ENCODE measurements at regions of chr9 and their contacts with region 1.

Region 1: GRCh38 chr9:114681594-114682332 is at the start of gene TEX48:
- H3K4me3 Mint-ChIP-seq: no peak within 1 kb of the TSS
- H3K27ac Mint-ChIP-seq: no peak within 1 kb of the TSS
- H3K4me1 Mint-ChIP-seq: peaks cover 26% of the 10 kb centered on the region
- H3K27me3 Mint-ChIP-seq: peaks cover 2% of the 10 kb centered on the region

Region 2: GRCh38 chr9:114738581-114739316 is 57.0 kb after region 1 on chr9:
- intact Hi-C with region 1: loop called (anchors 5 kb)
- H3K4me3 Mint-ChIP-seq: no peak overlapping the region
- H3K27ac Mint-ChIP-seq: peak overlapping the region; percentile 30
- H3K4me1 Mint-ChIP-seq: peaks cover 5% of the 10 kb centered on the region
- H3K27me3 Mint-ChIP-seq: peaks cover 14% of the 10 kb centered on the region

Region 3: GRCh38 chr9:115524453-115525059 is 842.8 kb after region 1 on chr9:
- intact Hi-C with region 1: loop called (anchors 1 kb)
- H3K4me3 Mint-ChIP-seq: no peak overlapping the region
- H3K27ac Mint-ChIP-seq: no peak overlapping the region
- H3K4me1 Mint-ChIP-seq: no peaks in the 10 kb centered on the region
- H3K27me3 Mint-ChIP-seq: no peaks in the 10 kb centered on the region

Measured in dendritic cell treated with granulocyte-macrophage colony-stimulating factor and Interleukin-4, amounts not matched to agents 40 ng/mL and 50 ng/mL, for 4 days (primary cell).